GM10248 (cell line): ENCODE measurements at regions of chr7 and their contacts with region 1.

Region 1: GRCh38 chr7:106023369-106024322 is 60.6 kb downstream of the CDHR3 start:
- DNase-seq: no peak
- CTCF ChIP-seq: no peak

Region 2: GRCh38 chr7:106009403-106010226 is 14.0 kb before region 1 on chr7:
- CTCF ChIA-PET with region 1: interaction called, 11 read pairs
- POLR2A ChIA-PET with region 1: no interaction called
- DNase-seq: peak; percentile 83
- CTCF ChIP-seq: peak; percentile 81

Region 3: DNA sequence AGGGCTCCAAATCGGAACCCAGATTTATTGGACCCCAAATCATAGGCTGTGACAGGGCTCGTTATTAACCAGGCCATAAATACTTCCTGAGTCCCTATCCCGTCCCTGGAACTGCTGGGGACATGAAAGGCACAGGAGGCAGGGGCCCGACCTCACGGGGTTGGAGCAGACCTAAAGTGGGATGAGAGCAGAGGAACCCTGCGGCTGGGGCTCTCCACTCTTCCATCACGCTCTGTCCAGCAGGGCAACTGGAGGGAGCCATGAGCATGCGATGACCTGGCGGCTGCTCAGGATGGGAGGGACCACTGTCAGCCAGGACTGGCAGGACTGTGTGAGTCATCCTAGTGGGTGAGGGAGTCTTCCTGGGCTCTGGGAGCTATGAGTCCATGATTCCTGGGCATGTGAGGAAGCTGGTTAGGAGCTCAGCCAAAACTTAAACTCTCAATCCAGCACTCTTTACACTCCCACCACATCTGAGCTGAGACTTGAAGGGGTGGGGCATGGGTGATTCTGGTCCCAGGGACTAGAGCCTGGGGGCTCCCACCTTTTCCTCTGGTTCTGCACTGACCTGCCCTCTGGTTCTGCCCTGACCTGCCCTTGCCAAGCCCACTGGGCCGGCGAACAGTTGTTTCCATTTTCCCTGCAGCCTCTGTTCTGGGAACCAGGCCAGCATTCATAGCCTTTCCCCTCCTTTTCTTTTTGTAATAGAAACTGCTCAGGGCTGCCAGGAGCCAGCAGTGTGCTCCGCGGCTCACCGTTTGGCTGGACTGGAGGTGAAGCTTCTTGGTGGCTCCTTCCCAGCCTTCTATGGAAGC is 41.3 kb after region 1 on chr7:
- CTCF ChIA-PET with region 1: no interaction called
- POLR2A ChIA-PET with region 1: no interaction called
- DNase-seq: no peak
- CTCF ChIP-seq: no peak

Region 4: DNA sequence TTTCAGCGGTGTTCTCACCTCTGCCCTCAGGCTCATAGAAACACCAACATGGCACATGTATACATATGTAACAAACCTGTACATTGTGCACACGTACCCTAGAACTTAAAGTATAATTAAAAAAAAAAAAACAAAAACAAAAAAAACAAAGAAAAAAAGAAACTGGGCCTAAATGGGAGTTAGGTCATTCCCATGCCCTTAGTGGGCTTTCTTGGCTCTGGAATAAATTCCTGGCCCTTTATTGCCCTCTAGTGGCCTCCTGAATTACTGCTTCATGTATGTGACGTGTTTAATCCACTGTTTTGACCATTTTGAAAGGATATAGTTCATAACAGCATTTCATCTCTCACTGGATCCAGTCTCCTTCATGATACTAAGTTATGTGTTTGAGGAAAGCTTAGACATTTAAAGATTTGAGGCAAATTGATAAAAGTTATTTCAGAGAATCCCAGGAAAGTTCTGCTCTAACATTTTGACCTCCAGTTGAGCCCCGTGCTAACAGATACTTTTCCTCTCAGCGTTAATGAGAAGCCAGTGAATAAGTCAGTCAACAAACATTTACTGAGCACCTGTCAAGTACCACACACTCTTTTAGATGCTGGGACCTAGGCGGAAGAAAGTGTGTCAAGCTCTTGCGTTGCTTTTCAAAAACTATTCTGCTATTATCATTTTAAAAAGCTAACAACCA is 143.2 kb after region 1 on chr7:
- CTCF ChIA-PET with region 1: no interaction called
- POLR2A ChIA-PET with region 1: no interaction called
- DNase-seq: no peak
- CTCF ChIP-seq: peak; percentile 79

Region 5: GRCh38 chr7:106927536-106927935 is 903.9 kb after region 1 on chr7:
- CTCF ChIA-PET with region 1: no interaction called
- POLR2A ChIA-PET with region 1: no interaction called
- DNase-seq: no peak
- CTCF ChIP-seq: no peak